Left colon (tissue), 2 donors: ENCODE measurements at regions of chr16 and their contacts with region 1.

Region 1: DNA sequence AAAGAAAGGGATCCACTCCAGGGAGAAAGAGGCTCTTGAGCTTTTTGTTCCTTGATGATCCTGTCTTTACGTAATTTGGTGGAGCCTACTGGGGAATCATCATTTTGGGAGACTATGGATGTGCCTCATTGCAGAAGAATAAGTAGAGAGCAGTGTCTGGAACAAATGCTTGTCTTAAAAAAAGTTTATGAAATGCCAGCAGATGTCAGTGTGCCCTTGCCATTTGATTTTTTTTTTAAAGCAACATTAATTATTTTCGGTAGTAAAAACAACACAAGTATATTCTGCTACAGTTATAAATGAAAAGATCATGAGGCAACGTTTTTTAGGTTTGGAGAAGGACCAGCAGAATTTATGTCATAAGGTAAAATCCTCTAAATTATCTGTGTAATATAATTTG is 934.8 kb upstream of the EEF2KMT start:
- DNase-seq: no peak
- ATAC-seq: no peak

Region 2: GRCh38 chr16:6643080-6643686 is 610.7 kb after region 1 on chr16:
- intact Hi-C with region 1: loop called in 1 of 2 experiments (anchors 10 kb)
- DNase-seq: peak in 1 of 2 donors; percentile 33
- ATAC-seq: peak; percentile 49